ENCODE measurements at regions of chr6 and their contacts with region 1.

Region 1: GRCh38 chr6:154510143-154510905 is at the start of gene CNKSR3:
- DNase-seq: peak; percentile 90
- ATAC-seq: peak; percentile 90
- total RNA-seq, gene CNKSR3: 20.6 TPM

Region 2: GRCh38 chr6:154403788-154404187 is 106.5 kb before region 1 on chr6:
- intact Hi-C with region 1: no loop called
- DNase-seq: no peak
- ATAC-seq: peak; percentile 66

Region 3: DNA sequence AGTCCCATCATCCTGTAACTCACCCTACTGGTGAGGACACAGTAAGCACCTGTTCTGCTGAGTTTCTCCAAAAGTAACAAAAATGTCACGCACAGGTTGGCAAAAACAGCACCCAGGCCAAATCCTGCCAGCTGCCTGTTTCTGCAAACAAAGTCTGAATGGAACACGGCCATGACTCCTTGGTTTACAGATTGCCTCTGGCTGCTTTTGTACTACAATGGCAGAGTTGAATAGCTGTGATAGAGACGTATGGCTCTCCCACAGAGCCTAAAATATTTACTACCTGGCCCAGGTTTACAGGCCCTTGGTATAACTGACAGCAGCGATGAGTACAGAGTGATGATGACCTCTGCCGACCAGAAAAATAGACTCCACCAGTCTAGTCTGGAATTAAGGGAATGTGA is 52.4 kb before region 1 on chr6:
- intact Hi-C with region 1: no loop called
- DNase-seq: no peak
- ATAC-seq: peak; percentile 42

Region 4: GRCh38 chr6:154593122-154593521 is 82.8 kb after region 1 on chr6:
- intact Hi-C with region 1: loop called (anchors 10 kb)
- DNase-seq: peak; percentile 57
- ATAC-seq: peak; percentile 89

Region 5: GRCh38 chr6:154653853-154654252 is 143.5 kb after region 1 on chr6:
- intact Hi-C with region 1: no loop called
- DNase-seq: no peak
- ATAC-seq: peak; percentile 59

Measured in left ventricle myocardium superior (tissue), 1 donor.